Aorta (tissue), 5 donors: ENCODE measurements at regions of chr12 and their contacts with region 1.

Region 1: GRCh38 chr12:76706101-76706500 is 57.8 kb upstream of the ZDHHC17 start:
- DNase-seq: no peak
- ATAC-seq: no peak
- H3K4me3 ChIP-seq: no peak overlapping the region
- H3K27ac ChIP-seq: no peak overlapping the region
- H3K4me1 ChIP-seq: no peaks in the 10 kb centered on the region
- H3K27me3 ChIP-seq: no peaks in the 10 kb centered on the region

Region 2: DNA sequence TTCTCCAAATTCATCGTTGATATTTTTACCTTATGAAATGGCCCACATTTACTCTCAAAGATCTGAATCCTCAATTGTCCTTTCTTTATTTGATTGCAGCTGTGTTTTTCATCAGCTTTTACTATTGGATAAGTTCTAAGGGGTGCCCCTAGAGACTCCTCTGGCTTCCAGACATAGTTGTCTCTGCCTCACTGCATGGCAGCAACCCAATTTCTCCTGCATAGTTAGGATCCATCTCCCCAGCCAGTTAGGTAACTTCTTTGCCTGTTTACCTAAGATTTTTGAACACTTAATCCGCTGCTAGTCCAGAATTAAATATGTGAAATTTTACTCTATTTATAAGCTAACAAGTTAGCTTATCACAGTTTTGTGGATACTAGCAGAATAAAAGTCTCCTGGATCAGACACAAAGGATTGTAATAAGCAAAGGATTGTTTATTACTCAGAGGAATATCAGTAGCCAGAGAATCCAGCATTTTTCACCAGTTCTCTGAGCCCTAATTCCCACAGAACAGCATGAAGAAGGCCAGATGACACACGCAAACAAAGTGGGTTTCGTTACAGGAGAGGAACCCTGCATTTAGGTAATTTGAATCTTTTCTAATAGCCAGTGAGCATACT is 459.0 kb before region 1 on chr12:
- intact Hi-C with region 1: no loop called
- DNase-seq: no peak
- ATAC-seq: no peak
- H3K4me3 ChIP-seq: no peak overlapping the region
- H3K27ac ChIP-seq: no peak overlapping the region
- H3K4me1 ChIP-seq: no peaks in the 10 kb centered on the region
- H3K27me3 ChIP-seq: no peaks in the 10 kb centered on the region

Region 3: DNA sequence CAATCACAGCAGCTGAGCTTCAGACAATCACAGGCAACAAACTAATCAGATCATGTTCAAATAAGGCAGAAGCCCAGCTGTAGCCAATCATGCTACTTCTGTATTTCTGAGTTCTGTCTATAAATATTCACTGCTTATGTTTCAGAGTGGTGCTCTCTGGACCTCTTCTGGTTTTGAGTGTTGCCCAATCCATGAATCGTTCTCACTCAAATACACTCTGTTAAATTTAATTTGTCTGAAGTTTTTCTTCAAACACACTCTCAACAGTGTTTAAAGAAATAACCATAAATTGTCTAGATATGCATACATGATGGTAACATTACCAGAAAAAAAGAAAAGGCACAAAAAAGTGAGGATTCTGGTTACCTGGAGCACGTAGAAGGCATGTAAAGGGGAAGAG is 279.9 kb before region 1 on chr12:
- intact Hi-C with region 1: no loop called
- DNase-seq: no peak
- ATAC-seq: no peak
- H3K4me3 ChIP-seq: no peak overlapping the region
- H3K27ac ChIP-seq: no peak overlapping the region
- H3K4me1 ChIP-seq: no peaks in the 10 kb centered on the region
- H3K27me3 ChIP-seq: no peaks in the 10 kb centered on the region

Region 4: GRCh38 chr12:76621582-76622024 is 84.5 kb before region 1 on chr12:
- intact Hi-C with region 1: no loop called
- DNase-seq: peak; percentile 73 to 80
- ATAC-seq: peak; percentile 81
- H3K4me3 ChIP-seq: no peak overlapping the region
- H3K27ac ChIP-seq: no peak overlapping the region
- H3K4me1 ChIP-seq: no peaks in the 10 kb centered on the region
- H3K27me3 ChIP-seq: no peaks in the 10 kb centered on the region

Region 5: DNA sequence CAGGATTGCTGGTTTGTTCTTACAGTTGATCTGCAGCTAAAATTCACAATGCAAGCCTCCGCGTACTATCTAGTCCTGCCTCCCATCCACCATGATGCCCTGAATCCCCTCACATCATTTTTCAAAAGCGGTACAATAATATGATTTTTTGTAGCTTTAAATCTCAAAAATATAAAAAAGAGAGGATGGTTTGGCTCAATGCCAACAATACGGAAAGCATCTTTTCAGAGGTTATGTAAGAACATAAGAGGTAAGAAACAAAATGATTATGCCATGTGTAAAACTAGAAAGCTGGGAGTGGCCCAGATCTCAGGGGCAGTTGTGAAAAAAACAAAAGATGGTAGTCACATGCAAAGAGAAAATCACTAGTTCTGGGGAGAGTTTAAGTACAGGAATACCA is 33.8 kb after region 1 on chr12:
- intact Hi-C with region 1: loop called in 1 of 2 experiments (anchors 5 kb)
- DNase-seq: no peak
- ATAC-seq: no peak
- H3K4me3 ChIP-seq: no peak overlapping the region
- H3K27ac ChIP-seq: no peak overlapping the region
- H3K4me1 ChIP-seq: no peaks in the 10 kb centered on the region
- H3K27me3 ChIP-seq: peaks cover 0 to 3% of the 10 kb centered on the region in 2 donors